Activated CD8-positive, alpha-beta T cell treated with anti-CD3 and anti-CD28 coated beads for 36 hours (primary cell): ENCODE measurements at regions of chr6 and their contacts with region 1.

Region 1: DNA sequence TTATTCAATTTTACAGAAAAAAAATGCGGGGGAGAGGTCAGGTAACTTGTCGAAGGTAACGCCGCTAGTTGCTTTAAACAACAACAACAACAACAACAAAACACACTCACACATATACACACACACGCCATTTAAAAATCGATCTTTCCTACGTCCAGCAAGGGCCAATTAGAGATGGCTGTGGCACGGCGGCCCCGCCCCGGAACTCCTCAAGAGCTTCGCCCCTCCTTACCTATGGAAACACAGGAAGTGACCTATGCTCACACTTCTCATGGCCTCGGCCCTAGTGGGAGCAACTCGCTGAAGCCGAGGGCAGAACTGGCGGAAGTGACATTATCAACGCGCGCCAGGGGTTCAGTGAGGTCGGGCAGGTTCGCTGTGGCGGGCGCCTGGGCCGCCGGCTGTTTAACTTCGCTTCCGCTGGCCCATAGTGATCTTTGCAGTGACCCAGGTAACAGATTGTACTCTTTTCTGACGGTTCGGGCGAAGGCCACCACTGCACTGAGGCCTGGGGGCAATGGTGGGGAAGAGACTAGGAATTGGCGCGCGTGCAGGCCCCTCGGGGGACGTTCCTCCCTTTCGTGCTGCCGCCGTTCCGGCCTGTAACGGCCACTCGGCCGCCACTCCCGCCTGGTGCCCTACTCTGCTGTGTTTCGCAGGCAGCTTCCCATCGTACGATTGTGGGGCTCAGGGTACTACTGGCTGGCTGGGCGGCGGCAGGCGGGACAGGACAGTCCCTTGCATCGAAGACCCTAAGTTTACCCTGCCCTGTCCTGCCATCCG is at the start of gene TBP:
- DNase-seq: peak; percentile 99
- ATAC-seq: peak; percentile 96
- H3K4me3 Mint-ChIP-seq: no peak within 1 kb of the TSS
- H3K27ac Mint-ChIP-seq: no peak within 1 kb of the TSS
- H3K4me1 Mint-ChIP-seq: peaks cover 46% of the 10 kb centered on the region
- H3K27me3 Mint-ChIP-seq: no peaks in the 10 kb centered on the region
- CTCF ChIP-seq: no peak
- total RNA-seq, gene TBP: 21.0 to 22.1 TPM

Region 2: GRCh38 chr6:170584181-170584953 is 30.2 kb after region 1 on chr6 and contains the start of gene PDCD2:
- CTCF ChIA-PET with region 1: interaction called, 8 read pairs
- POLR2A ChIA-PET with region 1: interaction called, 20 read pairs
- intact Hi-C with region 1: no loop called
- DNase-seq: peak; percentile 94
- ATAC-seq: peak; percentile 96
- H3K4me3 Mint-ChIP-seq: peak within 1 kb of the TSS; percentile 100
- H3K27ac Mint-ChIP-seq: peak within 1 kb of the TSS; percentile 96
- H3K4me1 Mint-ChIP-seq: peaks cover 29% of the 10 kb centered on the region
- H3K27me3 Mint-ChIP-seq: no peaks in the 10 kb centered on the region
- CTCF ChIP-seq: no peak
- total RNA-seq, gene PDCD2: 132 to 140 TPM